RWPE1 (cell line): ENCODE measurements at regions of chr19 and their contacts with region 1.

Region 1: GRCh38 chr19:19554074-19555023 is 16.3 kb downstream of the CILP2 start:
- DNase-seq: no peak
- H3K27ac ChIP-seq: no peak overlapping the region
- CTCF ChIP-seq: peak; percentile 74

Region 2: DNA sequence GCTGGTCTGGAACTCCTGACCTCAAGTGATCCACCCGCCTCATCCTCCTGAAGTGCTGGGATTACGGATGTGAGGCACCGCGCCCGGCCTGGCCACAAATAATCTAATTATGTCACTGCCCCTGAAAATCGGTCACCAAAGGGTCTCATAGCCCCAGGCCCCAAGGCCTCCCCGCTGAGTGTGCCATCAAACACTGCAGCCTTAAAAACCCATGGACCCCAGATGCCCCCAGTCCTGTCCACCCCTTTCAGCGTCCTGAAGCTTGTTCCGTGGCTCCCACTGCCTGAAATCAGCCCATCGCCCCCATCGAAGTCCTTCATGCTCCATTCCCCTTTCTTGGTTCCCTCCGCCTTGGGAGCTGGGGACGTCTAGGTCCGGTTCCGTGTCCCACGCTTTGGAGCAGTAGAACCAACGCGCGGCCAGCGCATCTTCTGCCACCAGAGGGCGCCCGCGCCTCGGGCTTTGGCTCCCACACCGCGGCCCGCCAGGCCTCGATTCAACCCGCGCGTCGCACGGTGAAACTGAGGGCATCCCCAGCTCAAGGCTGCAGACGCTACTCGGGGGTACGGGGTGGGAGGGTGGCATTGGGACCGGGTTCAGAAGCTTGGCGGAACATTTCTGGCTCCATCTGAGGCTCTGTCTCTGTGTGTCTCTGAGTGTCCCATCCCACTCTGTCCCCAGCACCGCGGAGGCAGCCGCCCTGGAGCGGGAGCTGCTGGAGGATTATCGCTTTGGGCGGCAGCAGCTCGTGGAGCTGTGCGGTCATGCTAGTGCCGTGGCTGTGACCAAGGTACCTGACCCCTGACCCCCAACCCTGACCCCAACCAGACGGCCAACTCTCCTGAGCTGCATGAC is 22.2 kb before region 1 on chr19:
- CTCF ChIA-PET with region 1: interaction called, 25 read pairs
- POLR2A ChIA-PET with region 1: interaction called, 3 read pairs
- DNase-seq: peak; percentile 67
- H3K27ac ChIP-seq: 0 out of 2 replicates have a peak overlapping the region, but pooled peaks have one; percentile 2
- CTCF ChIP-seq: peak; percentile 98

Region 3: GRCh38 chr19:19568802-19569756 is 14.7 kb after region 1 on chr19:
- CTCF ChIA-PET with region 1: interaction called, 13 read pairs
- POLR2A ChIA-PET with region 1: no interaction called
- DNase-seq: no peak
- H3K27ac ChIP-seq: no peak overlapping the region
- CTCF ChIP-seq: no peak

Region 4: GRCh38 chr19:19643158-19644053 is 89.1 kb after region 1 on chr19 and contains the start of gene GMIP:
- CTCF ChIA-PET with region 1: interaction called, 10 read pairs
- POLR2A ChIA-PET with region 1: no interaction called
- DNase-seq: peak; percentile 86
- H3K27ac ChIP-seq: peak within 1 kb of the TSS; percentile 79
- CTCF ChIP-seq: peak; percentile 95

Region 5: GRCh38 chr19:19677579-19677978 is 123.2 kb after region 1 on chr19:
- CTCF ChIA-PET with region 1: no interaction called
- POLR2A ChIA-PET with region 1: no interaction called
- DNase-seq: no peak
- H3K27ac ChIP-seq: no peak overlapping the region
- CTCF ChIP-seq: no peak

Region 6: GRCh38 chr19:19758164-19758563 is 203.8 kb after region 1 on chr19:
- CTCF ChIA-PET with region 1: no interaction called
- POLR2A ChIA-PET with region 1: no interaction called
- DNase-seq: no peak
- H3K27ac ChIP-seq: no peak overlapping the region
- CTCF ChIP-seq: no peak